CD8-positive, alpha-beta memory T cell (primary cell): ENCODE measurements at regions of chr12 and their contacts with region 1.

Region 1: GRCh38 chr12:9039397-9039977 is 50.1 kb downstream of the KLRG1 start:
- DNase-seq: peak in 2 of 5 donors; percentile 61 to 64
- H3K4me3 ChIP-seq: no peak overlapping the region
- H3K4me3 Mint-ChIP-seq: peak overlapping the region; percentile 2 to 49 (median 4)
- H3K27ac ChIP-seq: no peak overlapping the region
- H3K27ac Mint-ChIP-seq: peak overlapping the region; percentile 2 to 86 (median 52)
- H3K4me1 ChIP-seq: peaks cover 43% of the 10 kb centered on the region
- H3K4me1 Mint-ChIP-seq: peaks cover 57 to 83% (median 81%) of the 10 kb centered on the region in 3 donors
- H3K27me3 ChIP-seq: no peaks in the 10 kb centered on the region
- H3K27me3 Mint-ChIP-seq: no peaks in the 10 kb centered on the region

Region 2: GRCh38 chr12:9027161-9028059 is 12.1 kb before region 1 on chr12:
- CTCF ChIA-PET with region 1: interaction called, 22 read pairs
- POLR2A ChIA-PET with region 1: interaction called, 3 read pairs
- DNase-seq: peak in 3 of 5 donors; percentile 14 to 51 (median 17)
- H3K4me3 ChIP-seq: no peak overlapping the region
- H3K4me3 Mint-ChIP-seq: peak overlapping the region in 6 of 7 donors; percentile 51 to 83 (median 63)
- H3K27ac ChIP-seq: no peak overlapping the region
- H3K27ac Mint-ChIP-seq: peak overlapping the region in 7 of 8 donors; percentile 75 to 96 (median 90)
- H3K4me1 ChIP-seq: peaks cover 81% of the 10 kb centered on the region
- H3K4me1 Mint-ChIP-seq: peaks cover 44 to 62% (median 61%) of the 10 kb centered on the region in 3 donors
- H3K27me3 ChIP-seq: no peaks in the 10 kb centered on the region
- H3K27me3 Mint-ChIP-seq: peaks cover 0 to 2% of the 10 kb centered on the region in 2 donors

Region 3: GRCh38 chr12:9049520-9050133 is 10.1 kb after region 1 on chr12:
- CTCF ChIA-PET with region 1: interaction called, 12 read pairs
- POLR2A ChIA-PET with region 1: interaction called, 5 read pairs
- DNase-seq: peak in 2 of 5 donors; percentile 44 to 48
- H3K4me3 ChIP-seq: no peak overlapping the region
- H3K4me3 Mint-ChIP-seq: peak overlapping the region in 2 of 7 donors; percentile 24 to 74
- H3K27ac ChIP-seq: no peak overlapping the region
- H3K27ac Mint-ChIP-seq: peak overlapping the region in 7 of 8 donors; percentile 50 to 93 (median 82)
- H3K4me1 ChIP-seq: peaks cover 17% of the 10 kb centered on the region
- H3K4me1 Mint-ChIP-seq: peaks cover 39 to 60% (median 39%) of the 10 kb centered on the region in 3 donors
- H3K27me3 ChIP-seq: no peaks in the 10 kb centered on the region
- H3K27me3 Mint-ChIP-seq: peaks cover 0 to 2% of the 10 kb centered on the region in 2 donors